SK-N-SH (cell line): ENCODE measurements at regions of chr20 and their contacts with region 1.

Region 1: GRCh38 chr20:38883081-38883980 is 42.9 kb upstream of the FAM83D start:
- DNase-seq: peak; percentile 89
- H3K4me3 ChIP-seq: no peak overlapping the region
- H3K27ac ChIP-seq: peak overlapping the region in 1 of 2 experiments; percentile 99; a peak in 2 of 4 replicates
- H3K4me1 ChIP-seq: peaks cover 0 to 75% of the 10 kb centered on the region in 2 experiments; a peak in 2 of 4 replicates
- H3K27me3 ChIP-seq: no peaks in the 10 kb centered on the region
- CTCF ChIP-seq: peak; percentile 13; the same call in 1 of the 2 replicates
- EP300 ChIP-seq: peak; percentile 67 to 98; a peak in 3 of 4 replicates
- RAD21 ChIP-seq: peak; percentile 23; the same call in 1 of the 2 replicates

Region 2: DNA sequence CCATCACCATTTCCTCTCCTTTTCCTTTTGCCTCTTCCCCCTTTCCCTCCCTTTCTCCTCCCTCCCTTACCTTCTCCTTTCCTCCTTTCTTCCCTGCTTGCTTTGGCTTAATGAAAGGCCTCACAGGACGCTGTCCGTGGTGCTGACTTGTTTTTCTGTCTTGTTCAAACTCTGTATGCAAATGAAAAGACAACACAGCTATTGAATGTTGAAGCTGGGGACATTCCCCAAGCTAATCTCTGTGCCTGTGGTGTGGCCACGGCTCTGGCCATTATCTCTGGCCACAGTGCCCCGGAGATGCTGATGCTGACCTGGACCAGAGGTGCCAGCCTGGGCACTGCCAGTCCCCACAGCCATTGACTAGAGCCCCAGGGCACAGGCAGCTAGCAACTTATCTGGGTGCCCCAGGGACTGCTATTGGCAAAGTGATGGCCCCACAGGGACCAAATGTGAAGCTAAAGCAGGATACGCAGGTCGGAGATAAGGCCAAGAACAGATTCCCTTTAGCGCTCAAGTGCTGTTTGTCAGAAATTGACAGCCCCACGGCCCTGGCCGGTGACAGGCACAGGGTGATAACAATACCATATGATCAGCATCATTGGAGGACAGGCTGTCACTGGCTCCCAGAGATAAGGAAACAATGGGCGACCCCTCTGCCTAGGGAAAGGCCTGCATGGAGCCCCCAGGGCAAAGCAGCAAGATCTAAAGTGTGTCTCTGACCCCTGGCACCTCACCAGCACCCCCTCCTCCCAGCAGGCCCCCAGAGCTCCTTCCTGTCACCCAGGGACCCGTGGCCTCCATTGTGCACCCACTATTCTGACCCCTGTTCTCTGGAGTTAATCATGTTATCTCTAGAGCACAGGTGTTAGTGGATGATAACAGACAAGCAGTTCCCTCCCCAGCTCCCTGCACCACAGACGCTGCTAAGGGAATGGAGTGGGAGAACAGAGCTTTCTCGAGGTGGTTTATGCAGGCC is 190.6 kb before region 1 on chr20:
- CTCF ChIA-PET with region 1: no interaction called
- POLR2A ChIA-PET with region 1: no interaction called
- DNase-seq: peak; percentile 73
- H3K4me3 ChIP-seq: no peak overlapping the region
- H3K27ac ChIP-seq: peak overlapping the region in 1 of 2 experiments; percentile 58; a peak in 2 of 4 replicates
- H3K4me1 ChIP-seq: peaks cover 0 to 20% of the 10 kb centered on the region in 2 experiments; a peak in 1 of 4 replicates
- H3K27me3 ChIP-seq: no peaks in the 10 kb centered on the region
- CTCF ChIP-seq: no peak
- EP300 ChIP-seq: peak in 1 of 2 experiments; percentile 75; a peak in 2 of 4 replicates
- RAD21 ChIP-seq: no peak

Region 3: GRCh38 chr20:38790200-38791053 is 92.9 kb before region 1 on chr20:
- CTCF ChIA-PET with region 1: interaction called, 11 read pairs
- POLR2A ChIA-PET with region 1: no interaction called
- DNase-seq: peak; percentile 51
- H3K4me3 ChIP-seq: no peak overlapping the region; a peak in 1 of 4 replicates
- H3K27ac ChIP-seq: no peak overlapping the region
- H3K4me1 ChIP-seq: 0 out of 4 replicates have a peak, but pooled peaks cover 0 to 4% of the 10 kb centered on the region in 2 experiments
- H3K27me3 ChIP-seq: peaks cover 5% of the 10 kb centered on the region; the same call in 1 of the 2 replicates
- CTCF ChIP-seq: peak; percentile 67
- EP300 ChIP-seq: no peak
- RAD21 ChIP-seq: peak; percentile 53

Region 4: DNA sequence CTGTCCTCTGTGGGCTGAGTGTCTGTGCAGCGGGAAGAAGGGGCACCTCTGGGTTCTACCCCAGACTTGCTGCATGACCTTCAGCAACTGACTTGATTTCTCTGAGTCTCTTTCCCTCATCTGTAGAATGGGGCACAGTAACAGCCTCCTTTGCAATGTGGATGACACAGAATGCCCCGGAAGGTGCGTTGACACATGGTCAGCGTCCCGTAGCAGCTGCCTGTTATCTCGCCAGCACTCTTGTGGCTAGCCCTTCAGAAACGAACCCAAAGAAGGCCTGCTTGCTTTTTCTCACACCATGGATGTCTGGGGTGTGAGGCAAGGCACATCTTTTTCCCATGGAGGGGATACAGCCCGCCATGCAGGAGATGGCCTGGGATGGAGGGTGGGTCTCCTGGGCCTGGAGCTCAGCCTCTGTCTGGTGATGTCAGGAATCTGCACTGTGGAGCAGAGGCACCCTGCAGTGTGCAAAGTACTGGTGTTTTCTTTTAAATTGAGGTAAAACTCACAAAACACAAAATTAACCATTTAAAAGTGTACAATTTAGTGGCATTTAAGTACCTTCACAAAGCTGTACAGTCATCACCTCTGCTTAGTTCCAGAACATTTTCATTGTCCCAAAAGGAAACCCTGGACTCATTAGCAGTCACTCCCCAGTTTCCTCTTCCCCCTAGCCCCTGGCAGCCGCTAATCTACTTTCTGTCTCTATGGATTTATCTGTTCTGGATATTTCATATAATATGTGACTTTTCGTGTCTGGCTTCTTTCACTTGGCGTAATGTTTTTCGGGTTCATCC is 16.9 kb before region 1 on chr20:
- CTCF ChIA-PET with region 1: interaction called, 6 read pairs
- POLR2A ChIA-PET with region 1: interaction called, 14 read pairs
- DNase-seq: peak; percentile 57
- H3K4me3 ChIP-seq: no peak overlapping the region
- H3K27ac ChIP-seq: peak overlapping the region in 1 of 2 experiments; percentile 99; a peak in 2 of 4 replicates
- H3K4me1 ChIP-seq: peaks cover 0 to 59% of the 10 kb centered on the region in 2 experiments; a peak in 2 of 4 replicates
- H3K27me3 ChIP-seq: no peaks in the 10 kb centered on the region; the same call in 1 of the 2 replicates
- CTCF ChIP-seq: no peak
- EP300 ChIP-seq: peak in 1 of 2 experiments; percentile 98; a peak in 2 of 4 replicates
- RAD21 ChIP-seq: peak; percentile 37; the same call in 1 of the 2 replicates